Ascending aorta (tissue), 2 donors: ENCODE measurements at regions of chr4 and their contacts with region 1.

Region 1: DNA sequence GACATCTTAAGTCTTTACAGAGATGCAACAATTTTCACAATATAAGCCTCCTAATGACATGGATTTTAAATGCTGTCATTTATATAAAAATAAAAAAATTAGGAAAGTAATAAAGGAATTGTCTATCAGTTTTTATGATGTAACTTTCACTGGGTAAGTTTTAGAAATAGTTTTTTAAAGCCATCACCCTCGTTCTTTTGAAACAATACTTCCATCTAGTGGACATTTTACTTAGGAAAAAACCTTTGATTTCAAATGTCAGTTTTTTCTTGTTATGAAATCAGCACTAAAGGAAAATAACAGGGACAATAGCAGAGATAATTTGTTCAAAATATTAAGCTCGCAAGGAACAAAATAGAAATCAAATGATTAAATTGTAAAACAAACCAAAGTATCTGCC is 24.3 kb upstream of the NDNF start:
- DNase-seq: no peak
- H3K4me3 ChIP-seq: no peak overlapping the region
- H3K27ac ChIP-seq: no peak overlapping the region
- H3K4me1 ChIP-seq: no peaks in the 10 kb centered on the region
- H3K27me3 ChIP-seq: no peaks in the 10 kb centered on the region
- CTCF ChIP-seq: peak; percentile 17 to 64 (median 60)

Region 2: DNA sequence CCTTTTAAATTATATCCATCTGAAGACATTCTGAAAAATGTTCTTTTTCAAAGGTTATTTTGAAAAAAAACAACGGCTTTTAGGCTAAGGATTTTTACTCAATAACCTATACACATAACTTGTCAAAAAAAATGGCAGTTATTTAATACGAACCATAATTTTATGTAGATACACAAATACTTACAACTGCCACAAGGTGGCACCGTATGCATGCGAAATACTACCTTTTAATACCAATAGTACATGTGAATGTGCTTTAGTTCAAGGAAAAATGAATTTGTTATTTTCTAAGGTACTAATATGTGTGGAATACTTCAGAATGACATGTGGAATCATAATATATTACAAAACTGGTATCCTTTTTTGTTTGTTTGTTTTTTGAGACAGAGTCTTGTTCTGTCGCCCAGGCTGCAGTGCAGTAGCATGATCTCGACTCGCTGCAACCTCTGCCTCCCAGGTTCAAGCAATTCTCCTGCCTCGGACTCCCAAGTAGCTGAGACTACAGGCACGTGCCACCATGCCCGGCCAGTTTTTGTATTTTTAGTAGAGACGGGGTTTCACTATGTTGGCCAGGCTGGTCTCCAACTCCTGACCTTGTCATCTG is 1025.3 kb before region 1 on chr4:
- intact Hi-C with region 1: loop called (anchors 5 kb)
- DNase-seq: no peak
- H3K4me3 ChIP-seq: no peak overlapping the region
- H3K27ac ChIP-seq: no peak overlapping the region
- H3K4me1 ChIP-seq: peaks cover 0 to 16% of the 10 kb centered on the region in 2 donors
- H3K27me3 ChIP-seq: no peaks in the 10 kb centered on the region
- CTCF ChIP-seq: peak; percentile 58 to 78 (median 68)

Region 3: GRCh38 chr4:120156120-120156718 is 940.4 kb before region 1 on chr4:
- intact Hi-C with region 1: loop called (anchors 1 kb)
- DNase-seq: no peak
- H3K4me3 ChIP-seq: no peak overlapping the region
- H3K27ac ChIP-seq: no peak overlapping the region
- H3K4me1 ChIP-seq: no peaks in the 10 kb centered on the region
- H3K27me3 ChIP-seq: no peaks in the 10 kb centered on the region
- CTCF ChIP-seq: peak; percentile 30 to 65 (median 46)

Region 4: DNA sequence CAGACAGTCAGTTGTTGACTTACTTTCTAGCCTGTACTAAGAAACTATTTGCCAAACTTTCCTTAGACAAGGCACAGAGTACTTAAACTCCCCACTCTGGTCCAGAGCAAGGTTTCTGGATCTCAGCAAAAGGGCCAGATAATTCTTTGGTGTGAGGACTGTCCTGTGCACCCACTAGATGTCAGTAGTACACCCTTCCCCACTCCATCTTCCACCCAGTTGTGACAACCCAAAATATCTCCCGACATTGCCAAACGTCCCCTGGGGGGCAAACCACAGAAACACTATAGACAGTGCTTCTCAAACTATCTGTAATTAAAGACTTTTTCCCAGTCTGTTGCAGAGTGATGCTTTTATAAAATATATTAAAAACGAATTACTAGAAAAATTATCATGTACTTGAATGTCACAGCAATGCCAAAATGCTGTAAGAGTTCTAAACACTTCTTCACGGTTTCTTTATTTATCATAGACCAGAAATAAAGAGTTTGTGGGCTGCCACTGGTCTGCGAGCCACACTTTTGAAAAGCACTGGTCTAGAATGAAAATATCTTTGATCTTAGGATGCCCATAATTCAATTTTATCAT is 377.6 kb before region 1 on chr4:
- intact Hi-C with region 1: loop called (anchors 5 kb)
- DNase-seq: no peak
- H3K4me3 ChIP-seq: no peak overlapping the region
- H3K27ac ChIP-seq: no peak overlapping the region
- H3K4me1 ChIP-seq: no peaks in the 10 kb centered on the region
- H3K27me3 ChIP-seq: no peaks in the 10 kb centered on the region
- CTCF ChIP-seq: peak in 2 of 3 experiments; percentile 36 to 52

Region 5: DNA sequence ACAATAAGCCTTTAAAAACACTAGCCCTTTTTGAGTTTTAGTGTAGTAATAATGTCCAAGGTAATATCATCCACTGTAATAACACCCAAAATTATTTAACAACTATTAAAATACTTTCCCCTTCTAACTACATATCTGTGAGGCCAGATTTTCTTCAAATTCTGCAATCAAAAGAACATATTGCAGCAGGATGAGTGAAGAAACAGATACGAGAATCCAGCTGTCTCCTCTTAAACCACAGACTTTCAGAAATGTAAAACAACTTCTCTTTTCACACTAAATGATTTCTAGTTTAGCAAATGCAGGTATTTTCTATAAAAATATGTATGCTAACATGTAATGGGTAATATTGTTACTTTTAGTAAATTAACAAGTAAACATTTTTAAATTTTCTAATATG is 323.0 kb before region 1 on chr4:
- intact Hi-C with region 1: no loop called
- DNase-seq: no peak
- H3K4me3 ChIP-seq: no peak overlapping the region
- H3K27ac ChIP-seq: no peak overlapping the region
- H3K4me1 ChIP-seq: no peaks in the 10 kb centered on the region
- H3K27me3 ChIP-seq: no peaks in the 10 kb centered on the region
- CTCF ChIP-seq: no peak